ENCODE measurements at regions of chr11 and their contacts with region 1.

Region 1: DNA sequence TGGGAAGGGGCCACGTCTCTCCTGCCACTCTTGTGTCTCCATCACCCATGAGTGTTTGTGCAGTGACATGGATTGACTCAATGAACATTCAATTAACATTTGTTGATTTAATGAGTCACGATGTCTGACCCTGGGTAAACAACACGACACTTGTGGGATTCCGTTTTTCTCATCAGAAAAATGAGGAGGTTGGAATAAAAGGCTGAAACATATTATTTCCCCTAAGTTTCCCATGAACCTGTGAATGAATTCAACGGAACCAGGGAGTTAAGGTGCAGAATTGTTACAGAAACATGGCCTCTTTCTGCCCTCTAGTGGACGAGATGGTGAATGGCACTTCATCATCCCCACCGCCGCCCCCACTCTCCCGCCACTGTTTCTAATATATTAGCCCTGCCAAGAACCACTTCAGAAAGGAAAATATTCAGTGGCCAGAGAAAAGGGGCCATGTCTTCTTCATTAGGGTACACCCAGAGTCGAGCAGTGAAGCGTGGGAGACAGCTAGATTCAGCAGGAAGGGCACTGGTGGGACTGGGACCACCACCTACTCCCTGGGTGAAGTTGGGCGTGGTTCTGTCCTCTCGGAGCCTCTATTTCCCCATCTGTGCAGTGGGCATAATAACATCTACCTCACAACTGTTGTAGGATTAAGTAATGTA is 46.3 kb upstream of the SYT13 start:
- DNase-seq: no peak
- ATAC-seq: peak; percentile 77
- H3K4me3 ChIP-seq: no peak overlapping the region
- H3K27ac ChIP-seq: no peak overlapping the region
- H3K4me1 ChIP-seq: no peaks in the 10 kb centered on the region
- H3K27me3 ChIP-seq: no peaks in the 10 kb centered on the region
- CTCF ChIP-seq: peak; percentile 45 to 75 (median 50)
- EP300 ChIP-seq: no peak
- POLR2A ChIP-seq: no peak
- RAD21 ChIP-seq: peak; percentile 66

Region 2: DNA sequence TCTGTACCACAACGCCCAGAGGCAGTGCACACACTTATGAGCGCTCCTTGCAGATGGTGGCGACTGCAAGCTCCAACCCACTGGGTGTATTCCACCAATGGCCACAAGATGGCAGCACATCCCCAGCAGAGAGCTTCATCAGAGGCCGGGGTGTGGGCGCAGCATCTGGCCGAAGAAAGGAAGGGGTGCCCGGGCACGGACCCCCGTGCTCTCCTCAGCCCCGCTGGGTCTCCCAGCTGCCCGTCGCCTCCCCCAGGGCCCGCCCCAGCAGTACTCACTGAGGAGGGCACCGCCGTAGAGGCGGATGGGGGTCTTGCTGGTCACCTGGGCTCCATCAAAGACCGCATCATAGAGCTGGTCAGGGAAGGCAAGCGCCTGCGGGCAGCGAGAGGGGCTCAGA is 395.9 kb before region 1 on chr11:
- CTCF ChIA-PET with region 1: interaction called, 4 read pairs
- POLR2A ChIA-PET with region 1: no interaction called
- RAD21 ChIA-PET with region 1: no interaction called
- SMC1A ChIA-PET with region 1: no interaction called
- in situ Hi-C with region 1: loop called (anchors 25 kb)
- intact Hi-C with region 1: loop called (anchors 2 kb)
- DNase-seq: no peak
- ATAC-seq: peak; percentile 97
- H3K4me3 ChIP-seq: no peak overlapping the region
- H3K27ac ChIP-seq: no peak overlapping the region
- H3K4me1 ChIP-seq: no peaks in the 10 kb centered on the region
- H3K27me3 ChIP-seq: no peaks in the 10 kb centered on the region
- CTCF ChIP-seq: peak; percentile 86 to 94 (median 92)
- EP300 ChIP-seq: no peak
- POLR2A ChIP-seq: no peak
- RAD21 ChIP-seq: peak; percentile 97

Region 3: GRCh38 chr11:45110562-45110961 is 221.8 kb before region 1 on chr11:
- CTCF ChIA-PET with region 1: interaction called, 56 read pairs
- POLR2A ChIA-PET with region 1: no interaction called
- RAD21 ChIA-PET with region 1: interaction called, 5 read pairs
- SMC1A ChIA-PET with region 1: interaction called, 20 read pairs
- in situ Hi-C with region 1: loop called (anchors 5 kb)
- intact Hi-C with region 1: loop called (anchors 1 kb)
- DNase-seq: no peak
- ATAC-seq: peak; percentile 78
- H3K4me3 ChIP-seq: no peak overlapping the region
- H3K27ac ChIP-seq: no peak overlapping the region
- H3K4me1 ChIP-seq: no peaks in the 10 kb centered on the region
- H3K27me3 ChIP-seq: no peaks in the 10 kb centered on the region; a peak in 1 of 4 replicates
- CTCF ChIP-seq: peak; percentile 54 to 76 (median 60)
- EP300 ChIP-seq: no peak
- POLR2A ChIP-seq: no peak
- RAD21 ChIP-seq: peak; percentile 85

Region 4: GRCh38 chr11:45252134-45252855 is 80.1 kb before region 1 on chr11:
- CTCF ChIA-PET with region 1: interaction called, 5 read pairs
- POLR2A ChIA-PET with region 1: no interaction called
- RAD21 ChIA-PET with region 1: no interaction called
- SMC1A ChIA-PET with region 1: interaction called, 3 read pairs
- in situ Hi-C with region 1: no loop called
- intact Hi-C with region 1: loop called (anchors 1 kb)
- DNase-seq: no peak
- ATAC-seq: peak; percentile 94
- H3K4me3 ChIP-seq: no peak overlapping the region
- H3K27ac ChIP-seq: no peak overlapping the region
- H3K4me1 ChIP-seq: no peaks in the 10 kb centered on the region
- H3K27me3 ChIP-seq: no peaks in the 10 kb centered on the region; a peak in 1 of 4 replicates
- CTCF ChIP-seq: peak; percentile 58 to 73 (median 68); a peak in 5 of 6 replicates
- EP300 ChIP-seq: no peak
- POLR2A ChIP-seq: no peak
- RAD21 ChIP-seq: 0 out of 2 replicates have a peak, but pooled peaks have one; percentile 5

Measured in GM12878 (cell line).